Activated T-helper 1 cell treated with anti-CD3 and anti-CD28 coated beads, Interleukin-12 subunit alpha, Interleukin-12 subunit beta, Interleukin-2, Interleukin-4 antibody, amounts not matched to agents 30 ng/mL and 10 ng/mL and 1 ng/mL, durations not matched to agents 14 hours and 24 hours and 36 hours (primary cell): ENCODE measurements at regions of chr1 and their contacts with region 1.

Region 1: GRCh38 chr1:89041119-89041641 is 18.5 kb upstream of the GBP3 start:
- DNase-seq: no peak
- H3K4me3 Mint-ChIP-seq: peak overlapping the region; percentile 19
- H3K27ac Mint-ChIP-seq: peak overlapping the region; percentile 69
- H3K4me1 Mint-ChIP-seq: peaks cover 35% of the 10 kb centered on the region
- H3K27me3 Mint-ChIP-seq: peaks cover 1% of the 10 kb centered on the region

Region 2: DNA sequence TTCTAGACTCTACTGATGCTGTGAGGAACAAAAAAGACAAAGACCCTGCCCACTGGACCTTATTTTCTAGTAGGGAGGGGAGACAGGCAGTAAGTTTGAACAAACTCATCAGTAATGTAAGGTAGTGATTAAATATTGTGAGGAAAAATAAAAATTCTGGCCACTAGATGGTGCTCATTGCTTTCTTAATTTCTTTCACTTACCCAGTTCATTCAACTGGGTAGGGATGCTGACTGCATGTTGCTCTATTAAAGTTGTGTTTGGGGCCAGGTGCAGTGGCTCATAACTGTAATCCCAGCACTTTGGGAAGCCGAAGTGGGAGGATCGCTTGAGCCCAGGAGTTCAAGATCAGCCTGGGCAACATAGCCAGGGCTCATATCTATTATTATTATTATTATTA is 42.5 kb before region 1 on chr1:
- intact Hi-C with region 1: loop called (anchors 1 kb)
- DNase-seq: no peak
- H3K4me3 Mint-ChIP-seq: no peak overlapping the region
- H3K27ac Mint-ChIP-seq: no peak overlapping the region
- H3K4me1 Mint-ChIP-seq: peaks cover 25% of the 10 kb centered on the region
- H3K27me3 Mint-ChIP-seq: no peaks in the 10 kb centered on the region

Region 3: DNA sequence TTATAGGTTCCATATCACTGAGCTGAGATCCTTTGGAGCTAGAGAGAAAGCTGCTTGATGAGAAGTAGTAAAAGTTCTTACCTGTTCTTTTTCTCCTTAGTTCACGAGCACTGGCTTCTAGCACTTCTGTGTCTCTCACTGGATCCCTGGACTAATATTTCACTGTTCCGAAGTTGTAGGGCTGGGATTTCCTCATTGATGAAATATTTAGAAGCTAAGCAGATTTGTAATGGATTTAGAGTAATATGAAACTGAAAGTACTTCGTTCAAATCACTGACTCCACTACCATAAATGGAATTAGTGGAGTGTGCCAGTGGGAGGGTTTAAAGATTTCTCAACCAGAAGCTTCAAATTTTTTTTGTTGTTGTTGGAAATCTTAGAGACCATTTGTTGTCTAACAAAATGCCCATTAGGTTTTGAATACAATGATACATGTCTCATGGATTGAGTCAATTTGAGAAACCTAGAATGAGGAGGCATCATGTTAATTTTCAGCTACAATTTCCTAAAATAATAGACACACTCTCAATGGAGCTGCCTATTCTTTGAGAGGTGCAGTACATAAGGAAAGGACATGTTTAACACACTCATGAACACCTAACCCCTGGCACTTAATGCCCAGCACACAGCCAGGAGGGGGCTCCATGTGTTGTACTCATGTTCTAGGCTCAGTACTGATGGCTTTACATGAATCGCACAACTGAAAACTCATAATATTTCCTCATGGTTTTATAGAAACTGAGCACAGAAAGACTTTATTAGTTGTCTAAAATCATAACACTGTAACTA is 24.1 kb after region 1 on chr1 and contains the start of gene GBP1:
- intact Hi-C with region 1: loop called (anchors 2 kb)
- DNase-seq: no peak
- H3K4me3 Mint-ChIP-seq: peak within 1 kb of the TSS; percentile 91
- H3K27ac Mint-ChIP-seq: peak within 1 kb of the TSS; percentile 85
- H3K4me1 Mint-ChIP-seq: peaks cover 77% of the 10 kb centered on the region
- H3K27me3 Mint-ChIP-seq: no peaks in the 10 kb centered on the region
- total RNA-seq, gene GBP1: 39.1 and 39.5 TPM in 2 replicates

Region 4: DNA sequence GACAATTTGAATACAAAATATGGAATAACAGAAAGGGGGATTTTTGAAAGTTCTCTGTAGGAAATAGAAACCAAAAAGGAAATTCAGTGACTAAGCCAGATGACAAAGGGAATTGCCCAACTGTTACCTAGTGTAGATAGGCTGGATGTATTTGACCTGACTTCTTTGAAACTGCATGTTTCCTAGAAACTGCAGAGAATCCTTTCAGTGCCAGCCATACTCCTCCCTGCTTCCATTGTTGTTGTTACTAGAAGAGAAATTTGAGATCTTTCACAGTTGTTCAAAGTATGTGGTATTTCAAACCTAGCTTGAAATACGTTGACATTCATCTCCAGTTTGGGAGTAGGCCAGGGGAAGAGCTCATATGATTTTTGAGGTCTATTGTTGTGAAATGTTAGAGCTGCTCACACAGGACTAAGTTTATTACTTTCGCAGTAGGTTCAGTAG is 233.3 kb after region 1 on chr1:
- intact Hi-C with region 1: loop called (anchors 1 kb)
- DNase-seq: peak; percentile 43
- H3K4me3 Mint-ChIP-seq: peak overlapping the region; percentile 75
- H3K27ac Mint-ChIP-seq: peak overlapping the region; percentile 97
- H3K4me1 Mint-ChIP-seq: peaks cover 66% of the 10 kb centered on the region
- H3K27me3 Mint-ChIP-seq: no peaks in the 10 kb centered on the region

Region 5: DNA sequence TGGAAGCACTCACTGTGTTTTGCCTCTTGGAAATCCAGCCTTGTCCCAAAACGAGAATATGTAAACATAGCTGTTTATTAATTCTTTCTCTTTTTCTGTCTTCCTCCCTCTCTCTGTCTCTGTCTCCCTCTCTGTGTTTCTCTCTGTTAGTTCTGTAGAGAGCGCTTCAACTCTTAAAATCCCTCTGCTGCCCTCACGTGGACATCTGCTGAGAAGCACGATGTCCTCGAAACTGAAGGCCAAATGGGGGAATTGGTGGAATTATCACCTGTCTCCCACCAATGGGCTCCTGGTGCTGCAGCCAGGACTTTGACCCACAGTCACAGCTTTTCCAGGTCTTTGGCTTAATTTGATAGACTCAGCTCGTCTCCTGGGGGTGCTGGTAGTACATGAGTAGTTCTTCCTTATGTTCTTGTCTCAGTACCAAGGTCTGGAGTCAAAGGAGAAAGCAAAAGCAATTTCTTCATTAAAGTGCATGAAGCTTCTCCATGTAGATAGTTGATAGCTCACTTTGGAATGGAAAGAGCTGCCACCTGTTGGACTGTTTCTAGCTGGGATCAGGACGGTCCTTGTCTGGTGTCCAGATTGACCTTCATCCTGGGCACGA is 317.2 kb after region 1 on chr1:
- intact Hi-C with region 1: loop called (anchors 1 kb)
- DNase-seq: peak; percentile 76
- H3K4me3 Mint-ChIP-seq: peak overlapping the region; percentile 73
- H3K27ac Mint-ChIP-seq: peak overlapping the region; percentile 80
- H3K4me1 Mint-ChIP-seq: peaks cover 69% of the 10 kb centered on the region
- H3K27me3 Mint-ChIP-seq: no peaks in the 10 kb centered on the region

Region 6: DNA sequence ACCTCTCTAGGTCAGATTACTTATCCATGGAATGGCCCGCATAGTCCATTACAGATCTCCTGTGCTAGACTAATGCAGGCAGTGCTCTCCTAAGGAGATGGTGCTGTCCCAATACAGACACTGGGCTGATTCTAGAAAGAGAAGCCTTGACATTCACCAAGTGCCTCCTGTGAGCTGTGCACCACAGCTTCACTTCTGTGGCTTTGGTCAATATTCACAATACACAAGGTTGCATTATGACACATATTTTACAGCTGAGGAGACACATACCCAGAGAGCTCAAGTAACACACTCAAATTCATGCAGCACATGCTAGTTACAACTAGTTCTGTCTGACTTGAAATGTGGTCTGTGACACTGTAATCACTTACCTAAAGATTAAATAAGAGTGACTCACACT is 424.0 kb after region 1 on chr1:
- intact Hi-C with region 1: loop called (anchors 1 kb)
- DNase-seq: no peak
- H3K4me3 Mint-ChIP-seq: no peak overlapping the region
- H3K27ac Mint-ChIP-seq: no peak overlapping the region
- H3K4me1 Mint-ChIP-seq: peaks cover 40% of the 10 kb centered on the region
- H3K27me3 Mint-ChIP-seq: peaks cover 53% of the 10 kb centered on the region

Region 7: GRCh38 chr1:89611721-89612120 is 570.5 kb after region 1 on chr1:
- intact Hi-C with region 1: loop called (anchors 1 kb)
- DNase-seq: no peak
- H3K4me3 Mint-ChIP-seq: peak overlapping the region; percentile 73
- H3K27ac Mint-ChIP-seq: peak overlapping the region; percentile 99
- H3K4me1 Mint-ChIP-seq: peaks cover 88% of the 10 kb centered on the region
- H3K27me3 Mint-ChIP-seq: no peaks in the 10 kb centered on the region